PC-3 (cell line): ENCODE measurements at regions of chr4 and their contacts with region 1.

Region 1: DNA sequence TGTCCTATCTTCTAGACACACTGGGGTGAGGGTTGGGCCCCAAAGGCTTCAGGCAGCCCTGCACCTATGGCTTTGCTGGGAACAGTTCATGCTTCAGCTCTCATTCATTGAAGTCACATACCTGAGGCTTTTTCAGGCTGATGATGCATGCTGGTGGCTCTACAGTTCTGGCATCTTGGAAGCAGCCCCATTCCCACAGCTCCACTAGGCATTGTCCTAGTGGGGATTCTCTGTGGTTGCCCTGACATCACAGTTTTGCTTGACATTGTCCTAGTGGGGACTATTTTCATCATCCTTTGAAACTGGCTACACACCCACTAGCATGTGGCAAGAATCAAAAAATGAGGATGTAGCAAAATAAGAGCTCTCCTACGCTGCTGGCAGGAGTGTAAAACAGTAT is 37.7 kb upstream of the C4orf17 start:
- DNase-seq: no peak
- ATAC-seq: no peak
- H3K4me3 ChIP-seq: no peak overlapping the region
- H3K27ac ChIP-seq: no peak overlapping the region
- H3K4me1 ChIP-seq: no peaks in the 10 kb centered on the region
- H3K27me3 ChIP-seq: no peaks in the 10 kb centered on the region
- CTCF ChIP-seq: no peak

Region 2: GRCh38 chr4:98672583-98673287 is 800.4 kb before region 1 on chr4:
- CTCF ChIA-PET with region 1: no interaction called
- POLR2A ChIA-PET with region 1: interaction called, 10 read pairs
- intact Hi-C with region 1: no loop called
- DNase-seq: no peak
- ATAC-seq: no peak
- H3K4me3 ChIP-seq: no peak overlapping the region
- H3K27ac ChIP-seq: no peak overlapping the region
- H3K4me1 ChIP-seq: no peaks in the 10 kb centered on the region
- H3K27me3 ChIP-seq: no peaks in the 10 kb centered on the region
- CTCF ChIP-seq: no peak

Region 3: GRCh38 chr4:99483636-99484035 is 10.5 kb after region 1 on chr4:
- CTCF ChIA-PET with region 1: no interaction called
- POLR2A ChIA-PET with region 1: no interaction called
- intact Hi-C with region 1: no loop called
- DNase-seq: peak; percentile 24
- ATAC-seq: no peak
- H3K4me3 ChIP-seq: no peak overlapping the region
- H3K27ac ChIP-seq: no peak overlapping the region
- H3K4me1 ChIP-seq: no peaks in the 10 kb centered on the region
- H3K27me3 ChIP-seq: no peaks in the 10 kb centered on the region
- CTCF ChIP-seq: no peak